Breast epithelium (tissue), 4 donors: ENCODE measurements at regions of chr2 and their contacts with region 1.

Region 1: DNA sequence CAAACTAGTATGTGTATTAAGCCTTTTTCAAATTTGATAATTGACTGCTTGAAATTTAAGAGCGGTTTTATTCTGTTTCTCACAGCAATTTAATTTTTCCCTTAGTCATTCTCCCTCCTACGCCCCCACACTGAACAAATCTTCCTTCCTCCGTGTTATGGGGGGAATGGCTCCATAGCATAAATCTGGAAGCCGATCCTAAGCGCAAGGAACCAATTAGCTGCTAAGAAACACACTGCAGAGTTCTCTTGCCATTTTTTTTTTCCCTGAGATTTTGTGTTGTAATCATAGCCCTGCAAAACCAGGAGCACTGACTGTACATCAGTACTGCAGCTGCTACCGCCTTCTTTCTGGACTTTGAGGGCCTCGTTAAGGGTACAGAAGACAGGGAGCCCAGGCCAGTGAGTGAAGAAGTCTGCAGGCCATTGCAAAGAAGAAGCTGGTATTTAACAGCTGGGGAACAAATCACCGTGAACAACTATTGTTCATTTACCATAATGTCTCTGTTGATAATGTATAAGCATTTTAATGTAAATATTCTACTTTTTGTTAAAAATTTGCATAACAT is 263.9 kb downstream of the LRATD1 start:
- DNase-seq: no peak
- H3K4me3 ChIP-seq: no peak overlapping the region
- H3K27ac ChIP-seq: no peak overlapping the region
- H3K4me1 ChIP-seq: no peaks in the 10 kb centered on the region
- H3K27me3 ChIP-seq: no peaks in the 10 kb centered on the region
- CTCF ChIP-seq: no peak
- POLR2A ChIP-seq: no peak

Region 2: DNA sequence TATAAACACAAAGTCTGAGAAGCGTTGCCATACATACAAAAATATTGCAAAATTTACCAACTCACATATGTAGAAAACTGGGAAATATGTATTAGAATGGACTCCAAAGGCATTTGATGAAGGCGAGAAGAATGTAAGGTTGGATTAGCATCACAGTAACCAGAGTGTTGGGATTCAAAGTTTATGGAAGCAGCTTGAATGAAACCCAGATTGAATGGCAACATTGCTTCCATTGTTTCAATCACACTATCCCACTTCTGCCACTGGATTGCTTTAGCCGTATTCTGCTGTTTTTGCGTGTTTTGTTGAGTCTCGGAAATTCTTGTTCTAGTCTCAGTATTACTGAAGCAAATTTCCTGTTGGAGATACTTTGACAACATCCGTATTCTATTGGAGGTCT is 872.9 kb before region 1 on chr2:
- intact Hi-C with region 1: loop called (anchors 5 kb)
- DNase-seq: no peak
- H3K4me3 ChIP-seq: no peak overlapping the region
- H3K27ac ChIP-seq: no peak overlapping the region
- H3K4me1 ChIP-seq: no peaks in the 10 kb centered on the region
- H3K27me3 ChIP-seq: no peaks in the 10 kb centered on the region
- CTCF ChIP-seq: no peak
- POLR2A ChIP-seq: no peak

Region 3: GRCh38 chr2:14567561-14567960 is 328.9 kb before region 1 on chr2:
- intact Hi-C with region 1: loop called (anchors 5 kb)
- DNase-seq: no peak
- H3K4me3 ChIP-seq: no peak overlapping the region
- H3K27ac ChIP-seq: no peak overlapping the region
- H3K4me1 ChIP-seq: no peaks in the 10 kb centered on the region
- H3K27me3 ChIP-seq: no peaks in the 10 kb centered on the region
- CTCF ChIP-seq: no peak
- POLR2A ChIP-seq: no peak